ENCODE measurements at regions of chr16 and their contacts with region 1.

Region 1: DNA sequence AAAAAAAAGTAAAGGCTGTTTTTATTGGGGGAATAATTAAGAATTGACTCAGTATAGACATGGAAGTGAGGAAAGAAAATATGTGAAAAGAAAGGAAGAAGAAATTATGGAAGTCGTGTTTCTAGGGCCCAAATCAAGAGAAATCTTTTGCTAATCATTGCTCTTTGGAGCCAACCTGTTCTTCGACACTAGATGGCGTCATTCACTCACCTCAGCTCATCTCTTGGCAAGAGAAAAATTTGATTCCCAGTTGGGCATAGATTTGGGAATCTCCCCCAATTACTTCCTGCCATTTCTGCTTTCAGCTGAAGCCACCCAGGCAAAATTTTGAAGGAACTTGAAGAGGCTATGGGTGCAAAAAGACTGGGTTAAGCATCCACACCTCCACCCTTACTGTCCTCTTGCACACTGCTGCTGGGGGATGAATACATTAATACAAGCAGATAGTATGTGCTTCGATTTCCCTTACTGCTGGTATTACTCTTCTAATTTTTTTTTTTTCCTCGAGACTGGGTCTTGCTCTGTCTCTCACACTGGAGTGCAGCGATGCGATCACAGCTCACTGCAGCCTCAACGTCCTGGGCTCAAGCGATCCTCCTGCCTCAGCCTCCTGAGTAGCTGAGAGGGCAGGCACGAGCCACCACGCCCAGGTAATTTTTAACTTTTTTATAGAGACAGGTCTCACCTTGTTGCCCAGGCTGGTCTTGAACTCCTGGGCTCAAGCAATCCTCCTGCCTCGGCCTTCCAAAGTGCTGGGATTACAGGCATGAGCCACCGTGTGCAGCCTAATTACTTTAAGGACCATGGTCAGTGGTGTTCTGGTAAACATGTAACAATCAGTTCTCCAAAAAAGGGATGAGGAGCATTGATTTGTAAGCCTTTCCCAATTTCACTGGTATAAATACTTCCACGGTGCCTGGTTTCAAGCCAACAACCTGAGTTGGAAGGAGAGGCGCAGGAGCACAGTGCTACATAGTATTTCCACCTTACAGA is 13.5 kb downstream of the PSMD7 start:
- DNase-seq: peak; percentile 19 to 45 (median 31)
- H3K4me3 ChIP-seq: no peak overlapping the region
- H3K4me3 Mint-ChIP-seq: no peak overlapping the region
- H3K27ac ChIP-seq: no peak overlapping the region
- H3K27ac Mint-ChIP-seq: no peak overlapping the region
- H3K4me1 ChIP-seq: no peaks in the 10 kb centered on the region
- H3K4me1 Mint-ChIP-seq: no peaks in the 10 kb centered on the region
- H3K27me3 ChIP-seq: no peaks in the 10 kb centered on the region
- H3K27me3 Mint-ChIP-seq: no peaks in the 10 kb centered on the region
- CTCF ChIP-seq: peak; percentile 86

Region 2: GRCh38 chr16:74296432-74297144 is 13.5 kb before region 1 on chr16 and contains the start of gene PSMD7:
- intact Hi-C with region 1: no loop called
- DNase-seq: peak; percentile 84 to 89 (median 87)
- H3K4me3 ChIP-seq: peak within 1 kb of the TSS; percentile 83 to 92 (median 84)
- H3K4me3 Mint-ChIP-seq: peak within 1 kb of the TSS; percentile 94 to 96
- H3K27ac ChIP-seq: peak within 1 kb of the TSS; percentile 93 to 97
- H3K27ac Mint-ChIP-seq: peak within 1 kb of the TSS; percentile 95 to 99 (median 98)
- H3K4me1 ChIP-seq: peaks cover 21 to 31% of the 10 kb centered on the region in 2 donors
- H3K4me1 Mint-ChIP-seq: peaks cover 25% of the 10 kb centered on the region
- H3K27me3 ChIP-seq: no peaks in the 10 kb centered on the region
- H3K27me3 Mint-ChIP-seq: no peaks in the 10 kb centered on the region
- CTCF ChIP-seq: no peak
- polyA plus RNA-seq, gene PSMD7: 61.3 to 118 (median 96.7) TPM

Region 3: DNA sequence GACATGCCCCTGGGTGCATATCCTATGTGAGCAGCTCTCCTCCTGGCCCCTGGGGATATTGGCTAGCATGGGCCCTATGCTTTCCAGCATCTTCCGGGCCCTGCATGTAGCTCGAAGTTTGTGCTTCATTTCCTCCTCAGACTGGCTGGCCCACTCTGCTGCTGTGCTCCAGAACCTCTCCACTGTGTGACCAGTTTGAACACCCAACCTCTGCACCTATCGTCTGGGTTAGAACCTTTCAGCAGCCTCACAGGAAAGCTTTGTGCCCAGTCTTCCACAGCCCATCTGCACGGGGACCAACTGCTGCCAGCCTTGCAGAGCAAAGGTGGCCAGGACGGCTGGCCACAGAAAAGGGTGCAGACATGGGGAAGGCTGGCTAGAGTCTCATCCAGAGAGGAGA is 121.4 kb after region 1 on chr16:
- intact Hi-C with region 1: loop called in 1 of 2 experiments (anchors 2 kb)
- DNase-seq: no peak
- H3K4me3 ChIP-seq: no peak overlapping the region
- H3K4me3 Mint-ChIP-seq: no peak overlapping the region
- H3K27ac ChIP-seq: no peak overlapping the region
- H3K27ac Mint-ChIP-seq: no peak overlapping the region
- H3K4me1 ChIP-seq: no peaks in the 10 kb centered on the region
- H3K4me1 Mint-ChIP-seq: no peaks in the 10 kb centered on the region
- H3K27me3 ChIP-seq: no peaks in the 10 kb centered on the region
- H3K27me3 Mint-ChIP-seq: peaks cover 2 to 4% (median 3%) of the 10 kb centered on the region in 3 donors
- CTCF ChIP-seq: no peak